Mammary epithelial cell (primary cell): ENCODE measurements at regions of chr9 and their contacts with region 1.

Region 1: GRCh38 chr9:3828250-3828908 is 302.6 kb upstream of the RFX3 start:
- DNase-seq: peak; percentile 60
- H3K4me3 ChIP-seq: no peak overlapping the region
- H3K27ac ChIP-seq: no peak overlapping the region
- H3K4me1 ChIP-seq: peaks cover 36% of the 10 kb centered on the region
- H3K27me3 ChIP-seq: no peaks in the 10 kb centered on the region
- CTCF ChIP-seq: no peak

Region 2: GRCh38 chr9:3740743-3741298 is 87.6 kb before region 1 on chr9:
- CTCF ChIA-PET with region 1: no interaction called
- dilution Hi-C with region 1: no loop called
- in situ Hi-C with region 1: no loop called
- intact Hi-C with region 1: loop called (anchors 5 kb)
- DNase-seq: peak; percentile 60
- H3K4me3 ChIP-seq: no peak overlapping the region
- H3K27ac ChIP-seq: peak overlapping the region; percentile 52
- H3K4me1 ChIP-seq: peaks cover 17% of the 10 kb centered on the region
- H3K27me3 ChIP-seq: no peaks in the 10 kb centered on the region
- CTCF ChIP-seq: no peak

Region 3: DNA sequence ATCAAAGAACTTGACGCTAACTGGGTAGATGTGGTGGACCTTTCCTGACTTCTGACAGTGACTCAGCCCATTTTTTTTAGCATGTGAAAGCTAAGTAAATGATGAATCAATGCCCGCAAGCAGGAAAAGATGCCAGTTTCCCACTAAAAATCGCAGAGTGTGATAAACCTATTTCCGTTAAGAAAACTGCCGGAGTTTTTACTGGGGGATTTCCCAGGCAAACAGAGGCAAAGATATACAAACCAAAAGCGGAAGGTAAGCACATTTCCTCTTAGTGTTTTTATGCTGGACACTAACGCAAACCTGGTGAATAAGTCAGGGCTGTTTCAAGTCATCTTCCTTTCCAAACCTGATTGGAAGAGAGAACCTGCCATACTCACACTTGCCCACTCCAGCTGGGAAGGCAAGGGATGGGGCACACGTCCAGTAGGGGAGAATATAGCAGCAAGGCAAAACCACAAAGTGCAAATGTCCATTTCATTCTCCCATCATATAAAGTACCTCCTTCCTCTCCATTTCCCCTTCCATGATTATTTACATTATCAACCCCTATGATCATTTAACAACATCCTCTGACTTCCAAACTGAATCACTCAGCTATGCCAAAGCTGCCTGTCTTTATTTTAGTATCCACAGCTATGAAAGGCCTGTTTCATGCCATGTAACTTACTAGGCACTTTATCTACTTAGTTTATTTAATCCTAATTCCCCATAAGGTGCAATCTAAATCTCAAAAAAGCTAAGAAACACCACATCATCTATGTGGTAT is 47.2 kb after region 1 on chr9:
- CTCF ChIA-PET with region 1: no interaction called
- dilution Hi-C with region 1: no loop called
- in situ Hi-C with region 1: no loop called
- intact Hi-C with region 1: loop called (anchors 5 kb)
- DNase-seq: peak; percentile 65
- H3K4me3 ChIP-seq: no peak overlapping the region
- H3K27ac ChIP-seq: no peak overlapping the region
- H3K4me1 ChIP-seq: peaks cover 14% of the 10 kb centered on the region
- H3K27me3 ChIP-seq: no peaks in the 10 kb centered on the region
- CTCF ChIP-seq: no peak